ENCODE measurements at regions of chr12 and their contacts with region 1.

Region 1: GRCh38 chr12:122752464-122753318 is at the start of gene DENR:
- DNase-seq: peak; percentile 74
- H3K4me3 ChIP-seq: peak within 1 kb of the TSS; percentile 95
- CTCF ChIP-seq: peak; percentile 93

Region 2: GRCh38 chr12:122635471-122635870 is 117.2 kb before region 1 on chr12:
- CTCF ChIA-PET with region 1: interaction called, 143 read pairs
- POLR2A ChIA-PET with region 1: no interaction called
- DNase-seq: no peak
- H3K4me3 ChIP-seq: no peak overlapping the region
- CTCF ChIP-seq: no peak

Region 3: DNA sequence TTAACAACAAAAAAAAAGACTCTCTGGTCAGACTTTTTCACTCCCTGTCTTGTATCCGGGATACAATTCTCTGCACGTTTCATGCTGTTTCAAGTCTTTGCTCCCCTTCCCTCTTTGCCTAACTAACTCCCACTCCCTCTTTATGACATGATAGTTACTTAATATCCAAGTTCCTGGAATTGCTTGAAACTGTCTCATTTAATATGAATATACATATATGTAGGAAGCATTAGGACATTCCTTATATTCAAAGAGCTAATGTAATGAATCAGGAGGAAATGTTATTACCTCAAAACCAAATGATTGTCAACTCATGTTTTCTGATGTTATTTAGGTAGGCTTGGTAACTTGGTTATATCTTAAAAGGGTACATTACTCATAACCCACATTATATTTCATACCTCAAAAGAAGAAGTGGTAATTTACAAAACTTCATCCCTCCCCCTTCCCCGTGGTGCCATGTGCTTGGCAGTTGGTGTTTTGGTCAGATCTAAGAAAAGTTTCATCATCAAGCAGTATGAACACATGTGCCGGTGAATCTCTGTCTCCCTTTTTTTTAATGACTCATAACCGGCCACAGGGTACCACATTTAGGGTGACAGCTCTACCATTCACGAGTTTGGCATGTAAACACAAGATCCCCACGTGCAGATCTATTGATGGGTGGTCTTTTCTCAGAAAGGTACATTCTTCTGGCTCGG is 106.0 kb before region 1 on chr12:
- CTCF ChIA-PET with region 1: interaction called, 17 read pairs
- POLR2A ChIA-PET with region 1: no interaction called
- DNase-seq: peak; percentile 36
- H3K4me3 ChIP-seq: no peak overlapping the region
- CTCF ChIP-seq: no peak

Region 4: GRCh38 chr12:122865268-122866231 is 112.9 kb after region 1 on chr12:
- CTCF ChIA-PET with region 1: no interaction called
- POLR2A ChIA-PET with region 1: no interaction called
- DNase-seq: no peak
- H3K4me3 ChIP-seq: no peak overlapping the region
- CTCF ChIP-seq: peak; percentile 45